ENCODE measurements at regions of chr13 and their contacts with region 1.

Region 1: DNA sequence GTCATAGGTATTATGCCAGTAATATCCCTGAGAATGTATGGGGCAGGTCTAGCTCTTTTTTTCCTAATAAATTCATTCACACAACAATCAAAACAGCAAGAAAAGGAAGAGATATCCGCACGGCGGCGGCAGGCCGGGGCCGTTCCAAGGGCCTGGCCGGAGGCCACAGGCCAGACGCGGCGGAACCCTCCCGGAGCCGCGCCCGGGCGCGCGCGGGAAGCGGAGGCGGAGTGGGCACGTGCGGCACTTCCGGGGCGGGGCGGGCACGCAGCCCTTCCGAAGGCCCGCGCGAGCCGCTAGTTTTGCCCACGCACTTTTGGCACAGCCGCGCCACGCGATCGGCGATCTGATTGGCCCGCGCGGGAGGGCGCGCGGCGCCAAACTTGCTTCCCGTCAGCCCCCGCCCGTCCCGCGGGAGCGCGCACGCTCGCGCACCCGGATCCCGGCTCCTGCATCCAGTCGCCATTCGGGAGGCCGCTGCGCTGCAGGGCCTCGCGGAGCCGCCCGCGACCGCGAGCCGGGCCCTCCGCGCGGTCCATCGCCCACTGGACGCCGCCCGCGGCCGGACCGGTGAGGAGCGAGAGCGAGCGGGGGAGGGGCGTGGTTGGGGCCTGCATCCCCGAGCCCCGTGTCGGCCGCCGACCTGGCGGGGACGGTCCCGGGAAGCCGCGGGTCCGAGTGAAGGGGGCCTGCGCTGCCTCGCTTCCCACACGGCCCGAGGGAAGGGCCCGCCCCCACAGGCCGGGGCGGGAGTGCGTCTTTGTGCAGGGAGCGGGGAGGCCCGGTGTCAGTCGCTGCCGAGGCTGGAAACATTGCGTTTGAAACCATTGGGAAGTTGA is at the start of gene CHAMP1:
- DNase-seq: peak; percentile 97
- total RNA-seq, gene CHAMP1: 11.2 TPM

Region 2: DNA sequence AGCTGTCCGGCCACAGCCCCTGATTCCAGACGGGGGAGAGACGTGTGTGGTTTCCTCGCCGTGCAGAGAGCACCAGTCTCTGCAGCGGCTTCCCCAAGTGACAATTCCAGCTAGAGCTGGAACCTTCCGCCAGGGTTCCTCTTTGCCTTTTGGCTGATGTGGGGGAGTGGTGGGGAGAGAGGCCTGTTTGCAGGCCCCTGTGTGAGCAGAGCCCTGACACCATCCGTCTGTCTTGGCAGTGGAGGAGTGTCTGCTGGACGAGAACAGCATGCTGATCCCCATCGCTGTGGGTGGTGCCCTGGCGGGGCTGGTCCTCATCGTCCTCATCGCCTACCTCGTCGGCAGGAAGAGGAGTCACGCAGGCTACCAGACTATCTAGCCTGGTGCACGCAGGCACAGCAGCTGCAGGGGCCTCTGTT is 992.2 kb before region 1 on chr13:
- intact Hi-C with region 1: no loop called
- DNase-seq: no peak

Region 3: DNA sequence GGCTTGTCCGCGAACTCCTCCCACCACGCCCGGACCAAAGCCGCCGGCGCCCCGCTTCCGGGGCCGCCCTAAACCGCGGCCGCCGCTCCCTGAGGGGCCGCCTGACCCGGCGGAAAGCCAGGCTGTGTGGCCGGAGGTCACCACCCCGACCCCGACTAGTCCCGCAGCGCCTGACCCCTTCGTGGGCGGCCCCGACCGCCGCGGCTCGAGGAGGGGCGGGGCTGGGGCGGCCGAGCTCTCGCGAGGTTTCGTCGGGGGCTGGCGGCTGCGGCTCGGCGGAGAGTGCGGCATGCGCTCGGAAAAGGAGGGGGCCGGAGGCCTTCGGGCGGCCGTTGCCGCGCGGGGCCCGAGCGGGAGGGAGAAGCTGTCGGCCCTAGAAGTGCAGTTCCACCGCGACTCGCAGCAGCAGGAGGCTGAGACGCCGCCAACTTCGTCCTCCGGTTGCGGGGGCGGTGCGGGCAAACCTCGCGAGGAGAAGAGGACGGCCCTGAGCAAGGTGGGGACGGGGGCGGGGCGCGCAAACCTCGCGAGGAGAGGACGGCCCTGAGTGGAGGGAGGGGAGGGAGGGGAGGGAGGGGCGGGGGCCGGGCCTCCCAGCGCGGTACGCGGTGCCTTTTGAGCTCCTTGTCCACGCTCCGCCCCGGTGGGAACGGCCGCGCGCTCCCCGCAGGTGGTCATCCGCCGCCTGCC is 32.8 kb before region 1 on chr13 and contains the start of gene UPF3A:
- intact Hi-C with region 1: loop called (anchors 2 kb)
- DNase-seq: peak; percentile 95
- total RNA-seq, gene UPF3A: 28.8 TPM